ENCODE measurements at regions of chr20 and their contacts with region 1.

Region 1: GRCh38 chr20:32387252-32387651 is 29.1 kb downstream of the ASXL1 start:
- DNase-seq: peak; percentile 49
- H3K4me3 Mint-ChIP-seq: peak overlapping the region; percentile 38
- H3K27ac Mint-ChIP-seq: peak overlapping the region; percentile 57
- H3K4me1 Mint-ChIP-seq: peaks cover 46% of the 10 kb centered on the region
- H3K27me3 Mint-ChIP-seq: no peaks in the 10 kb centered on the region

Region 2: DNA sequence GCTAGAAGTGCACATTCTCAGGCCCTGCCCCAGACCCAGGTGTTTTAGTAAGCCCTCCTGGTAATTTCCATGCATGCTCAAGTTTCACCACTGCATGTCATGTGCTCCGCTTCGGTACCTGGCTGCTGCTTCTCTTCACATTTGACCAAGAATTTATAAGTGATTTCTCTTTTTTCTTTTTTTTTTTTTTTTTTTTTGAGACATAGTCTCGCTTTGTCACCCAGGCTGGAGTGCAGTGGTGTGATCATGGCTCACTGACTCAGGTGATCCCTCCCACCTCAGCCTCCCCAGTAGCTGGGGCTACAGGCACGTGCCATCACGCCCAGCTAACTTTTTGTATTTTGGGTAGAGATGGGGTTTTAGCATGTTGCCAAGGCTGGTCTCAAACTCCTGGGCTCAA is 261.7 kb before region 1 on chr20:
- intact Hi-C with region 1: no loop called
- DNase-seq: no peak
- H3K4me3 Mint-ChIP-seq: no peak overlapping the region
- H3K27ac Mint-ChIP-seq: no peak overlapping the region
- H3K4me1 Mint-ChIP-seq: peaks cover 2% of the 10 kb centered on the region
- H3K27me3 Mint-ChIP-seq: no peaks in the 10 kb centered on the region

Region 3: GRCh38 chr20:32207626-32208498 is 179.4 kb before region 1 on chr20 and contains the starts of genes PLAGL2 and POFUT1:
- intact Hi-C with region 1: no loop called
- DNase-seq: peak; percentile 88
- H3K4me3 Mint-ChIP-seq: peak within 1 kb of the TSS; percentile 98
- H3K27ac Mint-ChIP-seq: peak within 1 kb of the TSS; percentile 91
- H3K4me1 Mint-ChIP-seq: peaks cover 64% of the 10 kb centered on the region
- H3K27me3 Mint-ChIP-seq: no peaks in the 10 kb centered on the region
- total RNA-seq, gene PLAGL2: 125 and 126 TPM in 2 replicates
- total RNA-seq, gene POFUT1: 67.4 and 68.8 TPM in 2 replicates

Region 4: DNA sequence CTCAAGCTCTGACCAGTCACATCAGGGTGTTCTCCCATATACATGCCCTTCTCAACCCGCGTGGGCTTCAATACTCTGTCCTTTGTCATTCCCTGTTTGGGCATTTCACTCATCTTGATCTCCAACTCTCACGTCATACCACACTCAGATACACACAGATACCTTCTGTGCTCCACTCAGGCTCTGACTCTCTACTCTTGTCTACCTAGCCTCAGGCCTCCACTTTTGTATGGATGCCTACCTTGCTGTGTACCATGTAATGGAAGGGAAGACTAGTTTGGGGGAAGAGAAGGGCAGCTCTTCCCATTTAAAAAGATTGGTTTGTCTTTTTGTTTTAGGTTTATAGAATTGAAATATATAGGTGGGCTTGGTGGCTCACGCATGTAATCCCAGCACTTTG is 19.4 kb after region 1 on chr20:
- intact Hi-C with region 1: loop called (anchors 2 kb)
- DNase-seq: no peak
- H3K4me3 Mint-ChIP-seq: no peak overlapping the region
- H3K27ac Mint-ChIP-seq: peak overlapping the region; percentile 89
- H3K4me1 Mint-ChIP-seq: peaks cover 24% of the 10 kb centered on the region
- H3K27me3 Mint-ChIP-seq: no peaks in the 10 kb centered on the region

Region 5: DNA sequence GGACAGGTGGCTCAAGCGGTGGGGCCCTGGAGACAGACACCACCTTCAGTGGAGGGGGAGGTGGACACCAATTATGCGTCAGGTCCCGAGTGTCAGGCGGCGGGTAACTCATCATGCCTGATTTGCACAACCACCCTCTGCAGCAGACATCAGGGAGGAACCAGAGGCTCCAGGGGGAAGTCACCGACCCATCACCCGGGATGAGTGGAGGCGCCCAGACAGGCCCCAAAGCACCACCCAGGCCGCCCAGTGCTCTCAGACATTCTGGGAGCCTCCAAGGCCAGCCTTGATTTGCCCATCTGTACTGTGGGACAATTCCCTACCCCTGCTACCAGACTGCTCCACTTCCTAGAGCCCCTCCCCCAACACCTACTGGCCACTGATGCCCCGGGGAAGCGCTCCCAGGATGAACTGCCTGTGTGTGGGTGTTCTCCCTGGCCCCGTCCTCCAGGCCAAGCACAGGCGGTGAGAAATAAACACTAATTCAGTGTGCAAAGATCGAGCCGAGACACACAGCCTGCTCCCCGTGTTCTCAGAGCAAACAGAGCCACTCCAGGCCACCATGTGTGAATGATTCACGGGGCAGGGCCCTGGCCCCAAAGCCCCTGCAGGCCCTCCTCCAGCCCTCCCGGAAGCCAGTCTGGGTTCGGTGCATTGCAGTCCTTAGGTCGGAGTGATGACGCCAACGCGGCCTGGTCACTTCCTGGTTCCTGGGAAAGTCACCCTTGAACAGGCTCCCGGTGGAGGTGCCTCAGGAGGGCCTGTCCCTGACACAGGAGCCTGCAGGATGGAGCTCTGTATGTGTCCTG is 78.0 kb after region 1 on chr20:
- intact Hi-C with region 1: no loop called
- DNase-seq: no peak
- H3K4me3 Mint-ChIP-seq: no peak overlapping the region
- H3K27ac Mint-ChIP-seq: no peak overlapping the region
- H3K4me1 Mint-ChIP-seq: no peaks in the 10 kb centered on the region
- H3K27me3 Mint-ChIP-seq: no peaks in the 10 kb centered on the region

Measured in activated T-helper 2 cell treated with anti-CD3 and anti-CD28 coated beads, Interferon-gamma antibody, Interleukin-2, Interleukin-4, amounts not matched to agents 10 μg/mL and 5 μg/mL and 100 μg/mL, durations not matched to agents 14 hours and 24 hours and 36 hours (primary cell).